HepG2 (cell line): ENCODE measurements at regions of chr7 and their contacts with region 1.

Region 1: DNA sequence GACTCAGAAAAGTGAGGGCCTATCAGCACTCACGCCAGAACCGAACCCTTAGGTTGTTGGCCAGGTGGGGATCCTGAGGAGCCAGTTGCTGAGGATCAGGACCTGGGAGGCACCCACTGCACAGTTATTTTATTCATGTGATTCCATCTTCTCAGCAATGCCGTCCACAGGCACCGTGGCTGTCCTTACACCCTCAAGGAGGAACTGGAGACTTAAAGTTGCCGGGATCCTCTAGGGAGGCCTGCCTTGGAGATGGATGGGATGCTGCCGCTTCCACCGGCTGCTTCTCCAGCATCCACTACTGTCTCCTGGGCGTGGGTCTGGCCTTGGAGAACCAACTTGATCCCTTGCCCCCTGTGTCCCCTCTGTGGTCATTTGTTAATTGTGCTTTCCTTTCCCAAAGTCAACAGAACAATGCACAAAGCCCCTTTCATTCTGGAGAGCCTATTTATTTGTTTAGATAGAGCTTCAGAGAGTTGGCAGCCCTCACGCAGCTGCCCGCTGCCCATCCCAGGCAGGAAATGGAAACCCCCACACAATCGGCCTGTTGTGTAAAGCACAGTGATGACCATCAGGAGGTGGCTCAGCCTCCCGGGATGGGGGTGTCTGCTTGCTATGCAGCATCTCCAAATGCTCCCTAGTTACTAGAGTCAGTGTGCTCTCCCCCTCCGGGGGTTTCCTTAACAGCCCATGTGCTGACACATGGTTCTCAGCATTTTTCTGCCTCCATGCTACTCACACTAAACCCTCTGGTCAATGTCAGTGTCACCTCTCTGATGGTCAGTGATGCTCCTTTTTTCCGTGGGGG is 52.9 kb upstream of the IGFBP3 start:
- DNase-seq: peak; percentile 98
- ATAC-seq: peak; percentile 92
- H3K4me3 ChIP-seq: 0 out of 6 replicates have a peak overlapping the region, but pooled peaks of 1 of the 3 experiments have one; percentile 13
- H3K27ac ChIP-seq: peak overlapping the region; percentile 82
- H3K4me1 ChIP-seq: peaks cover 75% of the 10 kb centered on the region
- H3K27me3 ChIP-seq: no peaks in the 10 kb centered on the region
- CTCF ChIP-seq: no peak
- EP300 ChIP-seq: peak; percentile 67 to 96; a peak in 3 of 4 replicates
- POLR2A ChIP-seq: no peak
- RAD21 ChIP-seq: no peak

Region 2: DNA sequence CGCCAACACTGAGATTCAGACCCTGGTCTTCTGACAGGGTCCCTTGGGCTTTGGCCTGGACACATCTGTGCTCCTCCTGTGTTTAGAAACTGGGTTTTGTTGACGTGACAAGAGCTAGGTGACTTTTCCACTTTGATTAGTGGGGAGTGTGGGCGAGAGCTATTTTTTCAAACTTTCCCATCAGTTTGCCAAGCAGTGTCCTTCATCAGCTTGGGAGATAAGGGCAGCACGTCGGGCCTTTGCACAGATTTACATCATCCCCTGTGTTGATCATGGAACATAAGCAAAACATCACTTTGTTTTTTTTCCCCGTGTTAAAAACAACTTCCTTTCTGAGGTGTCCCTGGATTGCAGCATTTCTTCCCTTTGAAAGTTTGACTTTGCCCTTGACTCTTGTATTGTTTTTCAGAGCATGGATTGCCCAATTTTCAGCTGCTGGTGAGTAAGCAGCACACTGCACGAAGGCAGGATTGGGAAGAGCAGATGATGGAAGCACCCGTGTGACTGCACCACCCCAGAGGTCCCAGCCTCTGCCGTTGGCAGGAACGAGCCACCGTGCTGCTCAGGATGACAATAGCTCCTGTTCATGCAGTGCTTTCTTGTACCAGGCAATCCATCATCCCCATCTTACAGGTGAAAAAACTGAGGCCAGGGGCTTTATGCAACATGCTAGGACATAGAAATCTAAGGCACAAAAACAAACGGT is 92.0 kb before region 1 on chr7:
- CTCF ChIA-PET with region 1: no interaction called
- POLR2A ChIA-PET with region 1: interaction called, 16 read pairs
- in situ Hi-C with region 1: loop called (anchors 5 kb)
- intact Hi-C with region 1: no loop called
- DNase-seq: peak; percentile 98
- ATAC-seq: peak; percentile 77
- H3K4me3 ChIP-seq: peak overlapping the region in 1 of 3 experiments; percentile 30; a peak in 1 of 6 replicates
- H3K27ac ChIP-seq: peak overlapping the region; percentile 93
- H3K4me1 ChIP-seq: peaks cover 84% of the 10 kb centered on the region
- H3K27me3 ChIP-seq: no peaks in the 10 kb centered on the region
- CTCF ChIP-seq: peak; percentile 20; the same call in 1 of the 2 replicates
- EP300 ChIP-seq: peak; percentile 88 to 99; a peak in 3 of 4 replicates
- POLR2A ChIP-seq: peak in 1 of 2 experiments; percentile 50; a peak in 1 of 4 replicates
- RAD21 ChIP-seq: no peak

Region 3: DNA sequence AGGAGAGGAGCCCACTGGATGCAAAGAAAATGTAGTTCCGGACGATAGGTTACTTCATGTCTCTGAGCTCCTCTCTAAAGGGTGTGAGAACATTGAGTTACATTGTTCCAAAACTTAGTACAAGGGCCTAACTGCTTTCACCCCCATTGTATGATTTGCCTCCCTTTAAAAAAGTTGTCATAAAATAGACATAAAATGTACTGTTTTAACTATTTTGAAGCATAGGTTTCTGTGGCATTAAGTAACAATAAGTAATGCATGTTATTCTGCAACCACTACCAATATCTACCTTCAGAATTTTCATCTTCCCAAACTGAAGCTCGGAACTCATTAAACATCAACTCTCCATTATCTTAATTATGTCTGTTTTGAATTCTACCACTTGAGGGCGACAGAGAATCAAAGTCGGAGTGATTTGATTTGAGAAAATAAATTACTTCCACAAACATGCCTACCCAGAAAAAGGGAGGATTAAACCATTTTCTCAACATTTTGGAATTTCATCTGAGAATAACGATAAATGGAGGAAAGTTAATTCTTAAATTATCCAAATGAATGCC is 82.9 kb before region 1 on chr7:
- CTCF ChIA-PET with region 1: no interaction called
- POLR2A ChIA-PET with region 1: interaction called, 16 read pairs
- in situ Hi-C with region 1: loop called (anchors 5 kb)
- intact Hi-C with region 1: no loop called
- DNase-seq: peak; percentile 36
- ATAC-seq: no peak
- H3K4me3 ChIP-seq: peak overlapping the region; percentile 61 to 89 (median 84)
- H3K27ac ChIP-seq: peak overlapping the region; percentile 99
- H3K4me1 ChIP-seq: peaks cover 67% of the 10 kb centered on the region
- H3K27me3 ChIP-seq: no peaks in the 10 kb centered on the region; a peak in 1 of 5 replicates
- CTCF ChIP-seq: peak; percentile 46
- EP300 ChIP-seq: no peak
- POLR2A ChIP-seq: peak in 1 of 2 experiments; percentile 28; a peak in 1 of 4 replicates
- RAD21 ChIP-seq: 0 out of 2 replicates have a peak, but pooled peaks have one; percentile 10

Region 4: GRCh38 chr7:45927724-45928123 is 46.2 kb before region 1 on chr7:
- CTCF ChIA-PET with region 1: no interaction called
- POLR2A ChIA-PET with region 1: no interaction called
- in situ Hi-C with region 1: no loop called
- intact Hi-C with region 1: no loop called
- DNase-seq: no peak
- ATAC-seq: no peak
- H3K4me3 ChIP-seq: no peak overlapping the region
- H3K27ac ChIP-seq: no peak overlapping the region
- H3K4me1 ChIP-seq: peaks cover 4% of the 10 kb centered on the region; the same call in 1 of the 2 replicates
- H3K27me3 ChIP-seq: peaks cover 1 to 14% of the 10 kb centered on the region in 2 experiments; a peak in 2 of 5 replicates
- CTCF ChIP-seq: no peak
- EP300 ChIP-seq: no peak
- POLR2A ChIP-seq: no peak
- RAD21 ChIP-seq: no peak

Region 5: GRCh38 chr7:45985902-45986301 is 12.0 kb after region 1 on chr7:
- CTCF ChIA-PET with region 1: no interaction called
- POLR2A ChIA-PET with region 1: interaction called, 70 read pairs
- in situ Hi-C with region 1: no loop called
- intact Hi-C with region 1: loop called (anchors 2 kb)
- DNase-seq: no peak
- ATAC-seq: no peak
- H3K4me3 ChIP-seq: no peak overlapping the region
- H3K27ac ChIP-seq: no peak overlapping the region
- H3K4me1 ChIP-seq: peaks cover 82% of the 10 kb centered on the region
- H3K27me3 ChIP-seq: no peaks in the 10 kb centered on the region
- CTCF ChIP-seq: no peak
- EP300 ChIP-seq: no peak
- POLR2A ChIP-seq: no peak
- RAD21 ChIP-seq: no peak

Region 6: DNA sequence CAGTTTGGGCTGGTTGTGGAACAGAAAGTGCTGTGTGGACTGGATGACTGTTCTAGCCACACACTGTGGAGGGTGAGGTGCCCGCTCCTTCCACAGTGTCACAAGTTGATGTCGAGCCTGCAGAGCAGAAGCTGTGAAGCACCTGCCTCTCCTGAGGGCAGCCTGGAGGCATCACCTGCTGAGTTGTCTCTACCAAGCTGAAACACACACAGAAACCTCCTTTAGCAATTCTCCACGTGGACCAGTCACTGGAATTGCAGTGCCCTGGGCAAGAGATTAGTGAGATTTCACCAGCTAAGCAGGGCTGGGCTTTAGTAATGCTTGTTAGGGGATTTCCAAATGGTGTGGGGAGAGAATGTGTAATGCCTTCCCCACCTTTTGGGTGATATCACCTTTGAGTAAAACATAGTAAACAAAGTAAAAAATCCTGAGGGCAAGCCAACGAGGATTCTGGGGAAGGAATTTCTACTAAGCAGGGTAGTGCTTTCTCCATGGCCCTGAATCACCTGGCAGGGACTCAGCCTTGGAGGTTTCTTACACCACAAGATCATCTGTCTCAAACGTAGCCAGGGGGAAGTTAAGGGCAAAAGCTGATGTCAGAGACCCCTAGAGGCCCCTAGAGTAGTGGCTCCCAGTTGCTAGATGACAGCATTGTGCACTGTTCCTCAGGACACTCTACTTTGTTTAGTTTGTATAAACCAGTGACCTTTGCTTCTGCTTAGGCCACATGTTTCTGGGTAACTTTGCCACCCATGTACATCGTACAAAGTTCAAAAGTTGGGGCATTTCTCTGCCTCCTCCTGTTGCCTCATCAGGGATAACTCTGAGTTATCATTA is 180.2 kb after region 1 on chr7:
- CTCF ChIA-PET with region 1: no interaction called
- POLR2A ChIA-PET with region 1: interaction called, 7 read pairs
- in situ Hi-C with region 1: no loop called
- intact Hi-C with region 1: loop called (anchors 1 kb)
- DNase-seq: peak; percentile 87
- ATAC-seq: peak; percentile 93
- H3K4me3 ChIP-seq: peak overlapping the region in 1 of 3 experiments; percentile 13; a peak in 1 of 6 replicates
- H3K27ac ChIP-seq: peak overlapping the region; percentile 85
- H3K4me1 ChIP-seq: peaks cover 69% of the 10 kb centered on the region
- H3K27me3 ChIP-seq: no peaks in the 10 kb centered on the region
- CTCF ChIP-seq: peak; percentile 57
- EP300 ChIP-seq: peak in 1 of 2 experiments; percentile 86; a peak in 2 of 4 replicates
- POLR2A ChIP-seq: no peak
- RAD21 ChIP-seq: peak; percentile 17; the same call in 1 of the 2 replicates

Region 7: GRCh38 chr7:46215987-46216567 is 242.1 kb after region 1 on chr7:
- CTCF ChIA-PET with region 1: no interaction called
- POLR2A ChIA-PET with region 1: no interaction called
- in situ Hi-C with region 1: no loop called
- intact Hi-C with region 1: loop called (anchors 5 kb)
- DNase-seq: peak; percentile 97
- ATAC-seq: peak; percentile 98
- H3K4me3 ChIP-seq: 0 out of 6 replicates have a peak overlapping the region, but pooled peaks of 1 of the 3 experiments have one; percentile 20
- H3K27ac ChIP-seq: peak overlapping the region; percentile 57
- H3K4me1 ChIP-seq: peaks cover 23% of the 10 kb centered on the region
- H3K27me3 ChIP-seq: peaks cover 0 to 18% of the 10 kb centered on the region in 2 experiments; a peak in 1 of 5 replicates
- CTCF ChIP-seq: peak; percentile 21; the same call in 1 of the 2 replicates
- EP300 ChIP-seq: peak; percentile 29 to 79; a peak in 2 of 4 replicates
- POLR2A ChIP-seq: no peak
- RAD21 ChIP-seq: no peak